ENCODE measurements at regions of chr1 and their contacts with region 1.

Region 1: DNA sequence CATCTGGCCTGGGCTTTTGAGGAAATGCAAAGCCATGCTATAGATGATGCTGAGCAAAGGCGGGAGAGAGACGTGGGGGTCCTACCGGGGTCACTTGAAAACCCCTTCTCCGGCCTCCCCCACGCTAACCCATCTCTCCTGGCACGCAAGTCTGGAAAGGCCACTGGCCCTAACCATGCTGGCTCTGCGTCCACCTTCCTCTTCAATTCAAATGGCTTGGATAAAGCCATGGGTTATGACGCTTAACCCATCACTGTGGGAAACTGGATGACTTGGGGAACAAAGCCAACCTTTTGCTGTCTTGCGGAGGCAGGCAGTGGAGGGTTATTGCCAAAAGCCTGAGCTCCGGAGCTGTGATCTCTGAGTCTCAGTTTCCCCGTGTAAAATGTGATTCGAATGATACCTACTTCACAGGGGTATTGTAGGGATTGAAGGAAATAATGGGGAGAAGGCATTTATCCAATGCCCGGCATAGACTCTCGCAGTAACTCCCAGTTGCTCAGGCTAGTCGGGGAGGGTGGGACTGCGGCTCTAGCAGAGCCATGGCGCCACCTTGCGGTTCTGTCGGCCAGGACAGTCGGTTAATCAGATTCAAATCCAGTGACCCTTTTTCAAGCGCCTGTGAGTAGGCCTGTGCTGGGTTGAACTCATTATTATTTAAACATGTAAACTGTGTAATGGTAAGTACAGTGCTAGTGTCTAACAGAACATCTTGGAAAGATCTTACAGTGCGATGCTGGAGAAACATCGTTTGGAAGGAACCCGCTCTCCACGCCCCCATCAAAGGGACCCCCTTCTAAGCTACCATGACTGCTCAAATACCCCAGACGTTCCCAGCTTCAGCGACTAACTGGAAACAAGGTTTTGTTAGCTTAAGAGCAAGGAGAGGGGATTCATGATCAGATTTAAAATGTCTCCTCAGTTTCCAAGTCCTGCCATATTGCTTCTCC is 20.3 kb downstream of the NEK2 start:
- DNase-seq: peak; percentile 85
- ATAC-seq: peak; percentile 91
- H3K4me3 ChIP-seq: no peak overlapping the region
- H3K4me3 Mint-ChIP-seq: no peak overlapping the region
- H3K27ac ChIP-seq: no peak overlapping the region
- H3K27ac Mint-ChIP-seq: no peak overlapping the region
- H3K4me1 ChIP-seq: peaks cover 0 to 7% of the 10 kb centered on the region in 2 donors
- H3K4me1 Mint-ChIP-seq: no peaks in the 10 kb centered on the region
- H3K27me3 ChIP-seq: peaks cover 0 to 6% (median 1%) of the 10 kb centered on the region in 4 experiments
- H3K27me3 Mint-ChIP-seq: peaks cover 9% of the 10 kb centered on the region
- CTCF ChIP-seq: peak; percentile 94

Region 2: DNA sequence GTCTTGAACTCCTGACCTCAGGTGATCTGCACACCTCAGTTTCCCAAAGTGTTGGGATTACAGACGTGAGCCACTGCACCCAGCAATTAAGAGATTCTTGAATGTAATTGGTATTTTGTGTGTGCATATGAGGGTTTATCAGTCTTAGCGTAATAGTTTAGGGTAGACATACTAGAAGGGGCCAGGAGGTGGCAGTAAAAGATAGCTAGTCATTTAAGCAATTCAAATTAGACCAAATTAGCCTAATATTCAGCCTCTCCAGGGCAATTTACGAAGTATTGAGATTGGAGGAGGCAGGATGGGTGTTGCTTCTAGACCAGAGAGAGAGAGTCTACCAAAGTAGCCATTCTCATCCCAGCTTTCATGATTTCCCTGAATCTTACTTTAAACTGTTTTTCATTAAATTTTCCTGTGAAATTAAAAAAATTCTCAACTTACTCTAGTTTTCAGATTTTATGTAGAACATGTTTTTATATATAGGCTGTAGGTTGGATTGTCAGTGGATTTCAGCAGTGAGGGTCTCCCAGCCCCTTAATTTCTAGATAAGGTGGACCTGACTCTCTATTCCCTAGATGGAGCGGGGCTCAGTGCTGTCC is 1206.7 kb before region 1 on chr1:
- CTCF ChIA-PET with region 1: no interaction called
- POLR2A ChIA-PET with region 1: no interaction called
- intact Hi-C with region 1: loop called (anchors 5 kb)
- DNase-seq: peak; percentile 19
- ATAC-seq: no peak
- H3K4me3 ChIP-seq: no peak overlapping the region
- H3K4me3 Mint-ChIP-seq: no peak overlapping the region
- H3K27ac ChIP-seq: no peak overlapping the region
- H3K27ac Mint-ChIP-seq: no peak overlapping the region
- H3K4me1 ChIP-seq: no peaks in the 10 kb centered on the region
- H3K4me1 Mint-ChIP-seq: peaks cover 4% of the 10 kb centered on the region
- H3K27me3 ChIP-seq: no peaks in the 10 kb centered on the region
- H3K27me3 Mint-ChIP-seq: no peaks in the 10 kb centered on the region
- CTCF ChIP-seq: peak; percentile 48

Region 3: GRCh38 chr1:211469938-211470529 is 185.1 kb before region 1 on chr1:
- CTCF ChIA-PET with region 1: interaction called, 12 read pairs
- POLR2A ChIA-PET with region 1: no interaction called
- intact Hi-C with region 1: loop called (anchors 1 kb)
- DNase-seq: peak; percentile 47
- ATAC-seq: no peak
- H3K4me3 ChIP-seq: no peak overlapping the region
- H3K4me3 Mint-ChIP-seq: no peak overlapping the region
- H3K27ac ChIP-seq: no peak overlapping the region
- H3K27ac Mint-ChIP-seq: no peak overlapping the region
- H3K4me1 ChIP-seq: peaks cover 0 to 4% of the 10 kb centered on the region in 2 donors
- H3K4me1 Mint-ChIP-seq: peaks cover 5% of the 10 kb centered on the region
- H3K27me3 ChIP-seq: peaks cover 0 to 3% (median 2%) of the 10 kb centered on the region in 4 experiments
- H3K27me3 Mint-ChIP-seq: peaks cover 5% of the 10 kb centered on the region
- CTCF ChIP-seq: peak; percentile 71

Measured in B cell (primary cell).